ENCODE measurements at regions of chr2 and their contacts with region 1.

Region 1: GRCh38 chr2:241865957-241866789 is 3.4 kb upstream of the RTP5 start:
- DNase-seq: no peak
- ATAC-seq: peak in 1 of 3 donors; percentile 5
- H3K4me3 ChIP-seq: no peak overlapping the region
- H3K4me3 Mint-ChIP-seq: peak overlapping the region; percentile 6
- H3K27ac ChIP-seq: no peak overlapping the region
- H3K27ac Mint-ChIP-seq: peak overlapping the region in 1 of 2 donors; percentile 45
- H3K4me1 ChIP-seq: peaks cover 89% of the 10 kb centered on the region
- H3K4me1 Mint-ChIP-seq: peaks cover 48 to 72% of the 10 kb centered on the region in 2 donors
- H3K27me3 ChIP-seq: peaks cover 19% of the 10 kb centered on the region
- H3K27me3 Mint-ChIP-seq: peaks cover 0 to 32% of the 10 kb centered on the region in 2 donors
- CTCF ChIP-seq: no peak

Region 2: DNA sequence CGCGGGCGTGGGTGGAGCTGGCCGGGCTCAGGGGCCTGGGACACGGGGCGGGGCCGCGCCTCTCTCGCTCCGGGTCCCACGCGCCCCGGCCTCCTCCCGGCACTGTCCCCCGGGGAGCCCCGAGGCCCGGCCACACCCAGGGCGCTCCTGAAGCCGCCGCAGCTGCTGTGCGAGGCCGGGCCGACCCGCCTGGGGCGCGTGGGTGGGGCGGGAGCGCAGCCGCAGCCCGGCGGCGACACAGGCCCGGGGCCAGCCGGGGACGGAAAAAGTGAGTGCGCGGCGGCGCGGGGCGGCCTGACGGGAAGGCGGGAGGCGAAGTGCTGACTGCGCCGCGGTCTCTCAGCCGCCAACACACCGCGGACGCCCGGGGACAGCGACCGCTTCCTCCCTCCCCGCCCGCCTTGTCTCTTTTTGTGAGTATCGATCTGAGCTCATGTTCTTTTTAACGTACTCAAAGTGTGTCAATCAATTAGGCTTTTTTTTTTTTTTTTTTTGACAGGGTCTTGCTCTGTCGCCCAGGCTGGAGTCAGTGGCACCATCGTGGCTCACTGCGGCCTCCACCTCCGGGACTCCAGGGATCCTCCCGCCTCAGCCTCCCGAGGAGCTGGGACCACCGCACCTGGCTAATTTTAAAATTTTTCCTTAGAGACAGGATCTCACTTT is 22.0 kb before region 1 on chr2:
- intact Hi-C with region 1: loop called (anchors 2 kb)
- DNase-seq: peak; percentile 71 to 83
- ATAC-seq: peak; percentile 67 to 78 (median 73)
- H3K4me3 ChIP-seq: peak overlapping the region; percentile 27
- H3K4me3 Mint-ChIP-seq: peak overlapping the region; percentile 82
- H3K27ac ChIP-seq: no peak overlapping the region
- H3K27ac Mint-ChIP-seq: peak overlapping the region; percentile 43 to 71
- H3K4me1 ChIP-seq: peaks cover 35% of the 10 kb centered on the region
- H3K4me1 Mint-ChIP-seq: peaks cover 46 to 47% of the 10 kb centered on the region in 2 donors
- H3K27me3 ChIP-seq: no peaks in the 10 kb centered on the region
- H3K27me3 Mint-ChIP-seq: peaks cover 10 to 16% of the 10 kb centered on the region in 2 donors
- CTCF ChIP-seq: no peak

Measured in natural killer cell (primary cell).